IMR-90 (cell line): ENCODE measurements at regions of chr17 and their contacts with region 1.

Region 1: DNA sequence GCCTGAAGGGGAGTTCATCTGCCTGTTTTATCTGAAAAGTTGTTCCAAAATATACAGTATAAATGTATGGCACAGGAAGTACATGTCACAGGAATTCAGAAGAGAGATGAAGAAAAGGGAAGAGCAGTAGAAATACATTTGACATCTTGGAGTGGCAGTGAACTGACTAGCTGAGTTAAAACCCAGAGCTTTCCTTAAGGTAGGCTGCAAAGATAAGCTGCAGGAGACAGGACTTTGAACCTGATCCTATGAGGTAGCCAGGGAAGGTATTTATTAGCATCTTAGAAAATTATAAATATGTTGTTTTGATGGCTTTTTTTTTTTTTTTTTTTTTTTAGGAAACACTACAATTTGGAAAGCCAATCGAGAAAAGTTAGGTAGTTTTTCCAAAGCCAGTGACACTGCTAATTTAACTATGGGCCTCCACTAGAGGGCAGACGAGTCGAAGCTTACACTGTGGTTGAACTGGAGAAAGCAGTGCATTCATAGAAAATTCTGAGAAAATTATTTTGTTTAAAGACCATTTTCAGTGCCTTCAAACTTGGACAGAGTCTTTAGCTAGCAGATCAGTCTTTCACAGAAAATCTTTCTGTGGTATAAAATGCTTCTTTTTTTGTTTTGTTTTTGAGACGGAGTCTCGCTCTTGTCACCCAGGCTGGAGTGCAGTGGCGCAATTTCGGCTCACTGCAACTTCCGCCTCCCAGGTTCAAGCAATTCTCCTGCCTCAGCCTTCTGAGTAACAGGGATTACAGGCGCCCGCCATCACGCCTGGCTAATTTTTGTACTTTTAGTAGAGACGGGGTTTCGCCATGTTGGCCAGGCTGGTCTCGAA is 122.3 kb downstream of the SSH2 start:
- DNase-seq: peak; percentile 74
- ATAC-seq: peak; percentile 90
- H3K4me3 ChIP-seq: no peak overlapping the region
- H3K27ac ChIP-seq: no peak overlapping the region
- H3K4me1 ChIP-seq: peaks cover 2% of the 10 kb centered on the region; the same call in 1 of the 2 replicates
- H3K27me3 ChIP-seq: no peaks in the 10 kb centered on the region
- CTCF ChIP-seq: peak; percentile 93
- POLR2A ChIP-seq: peak; percentile 47; the same call in 1 of the 2 replicates
- RAD21 ChIP-seq: peak; percentile 98

Region 2: GRCh38 chr17:29789196-29790170 is 18.3 kb before region 1 on chr17:
- CTCF ChIA-PET with region 1: no interaction called
- POLR2A ChIA-PET with region 1: no interaction called
- dilution Hi-C with region 1: no loop called
- in situ Hi-C with region 1: no loop called
- intact Hi-C with region 1: no loop called
- DNase-seq: no peak
- ATAC-seq: no peak
- H3K4me3 ChIP-seq: no peak overlapping the region
- H3K27ac ChIP-seq: no peak overlapping the region; the same call in 1 of the 2 replicates
- H3K4me1 ChIP-seq: peaks cover 2% of the 10 kb centered on the region; the same call in 1 of the 2 replicates
- H3K27me3 ChIP-seq: no peaks in the 10 kb centered on the region
- CTCF ChIP-seq: no peak
- POLR2A ChIP-seq: no peak
- RAD21 ChIP-seq: no peak

Region 3: DNA sequence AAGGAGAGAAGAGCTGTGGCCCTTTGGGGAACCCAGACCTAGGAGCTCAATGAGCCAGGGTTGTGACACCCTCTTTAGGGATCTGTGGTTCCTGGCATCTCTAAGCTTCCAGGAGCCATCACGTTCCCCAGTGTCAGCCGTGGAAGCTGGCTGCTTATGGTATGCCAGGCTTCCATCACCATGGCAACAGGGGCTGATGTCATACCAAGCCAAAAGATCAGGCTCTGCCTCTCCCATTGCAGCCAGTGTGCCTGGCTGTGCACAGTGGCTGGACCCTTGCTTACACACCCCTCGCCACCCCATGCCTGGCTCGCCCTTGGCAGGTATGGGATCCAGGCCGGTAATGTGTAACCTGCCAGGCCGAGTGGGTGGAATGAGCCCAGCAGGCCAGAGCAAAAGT is 31.2 kb after region 1 on chr17:
- CTCF ChIA-PET with region 1: interaction called, 3 read pairs
- POLR2A ChIA-PET with region 1: interaction called, 24 read pairs
- dilution Hi-C with region 1: no loop called
- in situ Hi-C with region 1: no loop called
- intact Hi-C with region 1: no loop called
- DNase-seq: peak; percentile 44
- ATAC-seq: peak; percentile 31
- H3K4me3 ChIP-seq: no peak overlapping the region
- H3K27ac ChIP-seq: no peak overlapping the region
- H3K4me1 ChIP-seq: peaks cover 8% of the 10 kb centered on the region
- H3K27me3 ChIP-seq: no peaks in the 10 kb centered on the region
- CTCF ChIP-seq: no peak
- POLR2A ChIP-seq: no peak
- RAD21 ChIP-seq: no peak

Region 4: GRCh38 chr17:30021708-30022317 is 214.1 kb after region 1 on chr17:
- CTCF ChIA-PET with region 1: no interaction called
- POLR2A ChIA-PET with region 1: no interaction called
- dilution Hi-C with region 1: no loop called
- in situ Hi-C with region 1: loop called (anchors 10 kb)
- intact Hi-C with region 1: loop called (anchors 1 kb)
- DNase-seq: peak; percentile 61
- ATAC-seq: peak; percentile 87
- H3K4me3 ChIP-seq: no peak overlapping the region
- H3K27ac ChIP-seq: no peak overlapping the region
- H3K4me1 ChIP-seq: no peaks in the 10 kb centered on the region
- H3K27me3 ChIP-seq: peaks cover 6% of the 10 kb centered on the region; the same call in 1 of the 2 replicates
- CTCF ChIP-seq: peak; percentile 78
- POLR2A ChIP-seq: no peak
- RAD21 ChIP-seq: peak; percentile 75

Region 5: DNA sequence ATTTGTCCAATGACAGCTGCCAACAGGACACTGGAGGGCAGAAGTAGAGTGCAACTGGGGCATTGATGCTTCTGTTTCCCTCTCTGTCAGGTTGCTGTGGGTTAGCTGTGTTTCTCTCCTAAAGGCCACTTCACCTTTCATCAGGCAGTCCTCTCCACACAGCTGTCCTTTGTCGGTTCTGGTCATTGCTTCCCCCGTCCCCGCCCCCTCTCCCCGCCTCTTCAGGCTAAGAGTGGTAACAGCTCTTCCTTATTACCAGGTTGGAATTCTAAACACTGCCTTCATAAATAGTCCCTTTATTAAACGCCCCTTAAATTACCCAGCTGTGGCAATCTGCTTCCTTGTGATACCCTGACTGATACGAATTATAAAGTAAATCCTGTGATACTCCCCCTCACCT is 277.1 kb after region 1 on chr17:
- CTCF ChIA-PET with region 1: no interaction called
- POLR2A ChIA-PET with region 1: no interaction called
- dilution Hi-C with region 1: no loop called
- in situ Hi-C with region 1: loop called (anchors 10 kb)
- intact Hi-C with region 1: no loop called
- DNase-seq: no peak
- ATAC-seq: no peak
- H3K4me3 ChIP-seq: no peak overlapping the region
- H3K27ac ChIP-seq: no peak overlapping the region
- H3K4me1 ChIP-seq: no peaks in the 10 kb centered on the region
- H3K27me3 ChIP-seq: peaks cover 32% of the 10 kb centered on the region
- CTCF ChIP-seq: no peak
- POLR2A ChIP-seq: no peak
- RAD21 ChIP-seq: no peak

Region 6: GRCh38 chr17:30093463-30094147 is 285.9 kb after region 1 on chr17:
- CTCF ChIA-PET with region 1: interaction called, 8 read pairs
- POLR2A ChIA-PET with region 1: no interaction called
- dilution Hi-C with region 1: no loop called
- in situ Hi-C with region 1: loop called (anchors 10 kb)
- intact Hi-C with region 1: loop called (anchors 1 kb)
- DNase-seq: peak; percentile 58
- ATAC-seq: peak; percentile 76
- H3K4me3 ChIP-seq: no peak overlapping the region
- H3K27ac ChIP-seq: no peak overlapping the region
- H3K4me1 ChIP-seq: peaks cover 2% of the 10 kb centered on the region
- H3K27me3 ChIP-seq: no peaks in the 10 kb centered on the region
- CTCF ChIP-seq: peak; percentile 89
- POLR2A ChIP-seq: no peak
- RAD21 ChIP-seq: peak; percentile 94